MCF 10A (cell line): ENCODE measurements at regions of chr1 and their contacts with region 1.

Region 1: GRCh38 chr1:2429780-2430591 is 17.6 kb upstream of the PEX10 start:
- DNase-seq: no peak
- H3K4me3 Mint-ChIP-seq: peak overlapping the region; percentile 77
- H3K27ac Mint-ChIP-seq: no peak overlapping the region
- H3K4me1 Mint-ChIP-seq: no peaks in the 10 kb centered on the region
- H3K27me3 Mint-ChIP-seq: no peaks in the 10 kb centered on the region
- CTCF ChIP-seq: peak; percentile 47

Region 2: GRCh38 chr1:2412519-2413233 is 17.3 kb before region 1 on chr1 and contains the start of gene PEX10:
- CTCF ChIA-PET with region 1: interaction called, 14 read pairs
- POLR2A ChIA-PET with region 1: interaction called, 11 read pairs
- intact Hi-C with region 1: no loop called
- DNase-seq: peak; percentile 94
- H3K4me3 Mint-ChIP-seq: peak within 1 kb of the TSS; percentile 75
- H3K27ac Mint-ChIP-seq: peak within 1 kb of the TSS; percentile 87
- H3K4me1 Mint-ChIP-seq: peaks cover 8% of the 10 kb centered on the region
- H3K27me3 Mint-ChIP-seq: no peaks in the 10 kb centered on the region
- CTCF ChIP-seq: no peak
- total RNA-seq, gene PEX10: 31.3 and 36.1 TPM in 2 replicates

Region 3: DNA sequence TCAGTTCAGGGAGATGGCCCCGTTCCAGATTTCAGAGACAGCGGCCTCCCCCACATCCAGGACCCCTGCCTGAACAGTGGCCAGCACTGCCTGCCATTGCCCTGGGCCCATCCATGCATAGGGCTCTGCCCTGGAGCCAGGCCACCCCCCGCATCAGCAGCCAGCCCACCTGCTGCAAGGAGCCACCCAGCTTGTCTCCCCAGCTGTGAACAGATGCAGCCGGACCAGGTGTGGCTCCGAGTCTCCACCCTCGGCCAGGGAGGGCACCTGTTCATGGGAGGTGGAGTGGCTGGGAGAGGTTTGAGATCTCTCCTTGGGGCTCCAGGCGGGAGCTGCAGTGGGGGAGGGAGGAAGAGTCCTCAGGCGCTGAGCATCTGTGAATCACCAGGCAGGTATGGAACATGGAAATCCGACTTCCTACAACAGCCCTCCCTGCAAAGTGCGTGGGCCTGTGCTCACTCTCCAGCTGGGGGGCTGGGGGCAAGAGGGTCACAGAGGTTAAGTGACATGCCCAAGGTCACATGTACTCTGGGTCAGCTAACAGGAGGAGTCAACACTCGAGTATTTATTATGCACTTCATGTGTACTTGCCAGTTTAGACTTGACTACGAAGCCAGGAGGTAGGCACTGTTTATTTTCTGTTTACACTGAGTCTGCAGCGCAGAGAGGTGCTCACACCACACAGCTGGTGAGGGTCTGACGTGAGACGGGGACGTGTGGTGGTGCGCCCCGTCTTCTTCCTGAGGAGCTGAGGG is 104.9 kb after region 1 on chr1:
- CTCF ChIA-PET with region 1: interaction called, 4 read pairs
- POLR2A ChIA-PET with region 1: interaction called, 12 read pairs
- intact Hi-C with region 1: no loop called
- DNase-seq: peak; percentile 86
- H3K4me3 Mint-ChIP-seq: peak overlapping the region; percentile 41
- H3K27ac Mint-ChIP-seq: peak overlapping the region; percentile 59
- H3K4me1 Mint-ChIP-seq: peaks cover 48% of the 10 kb centered on the region
- H3K27me3 Mint-ChIP-seq: no peaks in the 10 kb centered on the region
- CTCF ChIP-seq: no peak

Region 4: GRCh38 chr1:2594001-2594640 is 164.1 kb after region 1 on chr1:
- CTCF ChIA-PET with region 1: no interaction called
- POLR2A ChIA-PET with region 1: no interaction called
- intact Hi-C with region 1: no loop called
- DNase-seq: peak; percentile 28
- H3K4me3 Mint-ChIP-seq: no peak overlapping the region
- H3K27ac Mint-ChIP-seq: no peak overlapping the region
- H3K4me1 Mint-ChIP-seq: no peaks in the 10 kb centered on the region
- H3K27me3 Mint-ChIP-seq: peaks cover 16% of the 10 kb centered on the region
- CTCF ChIP-seq: no peak